B cell (primary cell): ENCODE measurements at regions of chr3 and their contacts with region 1.

Region 1: DNA sequence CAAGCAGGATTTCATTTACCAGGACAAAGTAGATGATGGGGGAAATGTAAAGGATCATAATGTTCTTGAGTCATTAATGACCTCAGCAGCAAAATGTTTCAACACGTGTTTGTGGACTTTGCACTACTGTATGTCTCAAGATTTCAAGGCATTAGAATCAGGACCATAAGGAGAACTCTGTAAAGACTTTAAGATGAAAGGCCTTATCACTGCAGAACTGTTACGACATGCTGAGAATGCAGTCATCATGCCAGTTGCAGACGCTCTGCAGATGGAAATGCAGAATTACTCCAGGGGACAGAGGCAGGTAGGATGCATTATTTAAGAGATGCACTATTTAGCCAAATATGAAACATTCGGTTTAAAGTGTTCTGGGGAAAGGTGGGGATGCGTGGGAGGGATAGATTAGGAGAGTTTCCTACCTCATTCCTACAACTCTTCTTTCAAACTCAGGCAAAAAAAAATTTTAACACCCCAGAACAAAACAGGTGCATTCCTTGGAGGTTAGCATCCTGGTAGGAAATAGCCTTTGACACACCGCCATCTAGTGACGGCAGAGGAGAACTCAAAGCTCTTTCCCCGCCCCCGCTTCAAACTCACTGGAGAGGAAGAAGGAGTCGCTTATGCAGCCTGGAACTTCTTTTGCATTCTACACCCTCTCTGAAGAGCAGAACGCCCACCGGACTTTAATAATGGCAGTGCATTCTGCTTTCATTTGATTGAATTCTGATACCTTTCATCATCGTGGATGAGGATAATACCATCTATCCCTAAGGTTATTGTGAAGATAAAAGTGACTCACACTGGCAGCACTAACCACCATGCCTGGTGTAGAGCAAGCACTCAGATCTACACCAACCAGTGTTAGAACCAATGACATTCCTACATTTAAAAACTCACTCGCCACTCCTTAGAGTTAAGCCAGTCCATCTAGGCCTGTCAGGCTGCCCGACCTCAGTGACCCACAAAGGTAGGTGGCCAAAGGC is 43.1 kb upstream of the TOPAZ1 start:
- DNase-seq: peak; percentile 76
- ATAC-seq: peak; percentile 70
- H3K4me3 ChIP-seq: no peak overlapping the region
- H3K4me3 Mint-ChIP-seq: no peak overlapping the region
- H3K27ac ChIP-seq: no peak overlapping the region
- H3K27ac Mint-ChIP-seq: no peak overlapping the region
- H3K4me1 ChIP-seq: no peaks in the 10 kb centered on the region
- H3K4me1 Mint-ChIP-seq: no peaks in the 10 kb centered on the region
- H3K27me3 ChIP-seq: peaks cover 0 to 5% (median 1%) of the 10 kb centered on the region in 4 experiments
- H3K27me3 Mint-ChIP-seq: peaks cover 12% of the 10 kb centered on the region
- CTCF ChIP-seq: peak; percentile 90

Region 2: GRCh38 chr3:43540624-43541023 is 658.0 kb before region 1 on chr3:
- CTCF ChIA-PET with region 1: interaction called, 51 read pairs
- POLR2A ChIA-PET with region 1: no interaction called
- intact Hi-C with region 1: loop called (anchors 1 kb)
- DNase-seq: no peak
- ATAC-seq: no peak
- H3K4me3 ChIP-seq: no peak overlapping the region
- H3K4me3 Mint-ChIP-seq: no peak overlapping the region
- H3K27ac ChIP-seq: no peak overlapping the region
- H3K27ac Mint-ChIP-seq: no peak overlapping the region
- H3K4me1 ChIP-seq: no peaks in the 10 kb centered on the region
- H3K4me1 Mint-ChIP-seq: no peaks in the 10 kb centered on the region
- H3K27me3 ChIP-seq: no peaks in the 10 kb centered on the region
- H3K27me3 Mint-ChIP-seq: no peaks in the 10 kb centered on the region
- CTCF ChIP-seq: no peak

Region 3: GRCh38 chr3:43855674-43856299 is 342.8 kb before region 1 on chr3:
- CTCF ChIA-PET with region 1: interaction called, 51 read pairs
- POLR2A ChIA-PET with region 1: no interaction called
- intact Hi-C with region 1: loop called (anchors 1 kb)
- DNase-seq: peak; percentile 60
- ATAC-seq: peak; percentile 76
- H3K4me3 ChIP-seq: no peak overlapping the region
- H3K4me3 Mint-ChIP-seq: no peak overlapping the region
- H3K27ac ChIP-seq: no peak overlapping the region
- H3K27ac Mint-ChIP-seq: no peak overlapping the region
- H3K4me1 ChIP-seq: peaks cover 0 to 4% of the 10 kb centered on the region in 2 donors
- H3K4me1 Mint-ChIP-seq: peaks cover 3% of the 10 kb centered on the region
- H3K27me3 ChIP-seq: peaks cover 0 to 33% (median 10%) of the 10 kb centered on the region in 4 experiments
- H3K27me3 Mint-ChIP-seq: peaks cover 66% of the 10 kb centered on the region
- CTCF ChIP-seq: peak; percentile 54

Region 4: DNA sequence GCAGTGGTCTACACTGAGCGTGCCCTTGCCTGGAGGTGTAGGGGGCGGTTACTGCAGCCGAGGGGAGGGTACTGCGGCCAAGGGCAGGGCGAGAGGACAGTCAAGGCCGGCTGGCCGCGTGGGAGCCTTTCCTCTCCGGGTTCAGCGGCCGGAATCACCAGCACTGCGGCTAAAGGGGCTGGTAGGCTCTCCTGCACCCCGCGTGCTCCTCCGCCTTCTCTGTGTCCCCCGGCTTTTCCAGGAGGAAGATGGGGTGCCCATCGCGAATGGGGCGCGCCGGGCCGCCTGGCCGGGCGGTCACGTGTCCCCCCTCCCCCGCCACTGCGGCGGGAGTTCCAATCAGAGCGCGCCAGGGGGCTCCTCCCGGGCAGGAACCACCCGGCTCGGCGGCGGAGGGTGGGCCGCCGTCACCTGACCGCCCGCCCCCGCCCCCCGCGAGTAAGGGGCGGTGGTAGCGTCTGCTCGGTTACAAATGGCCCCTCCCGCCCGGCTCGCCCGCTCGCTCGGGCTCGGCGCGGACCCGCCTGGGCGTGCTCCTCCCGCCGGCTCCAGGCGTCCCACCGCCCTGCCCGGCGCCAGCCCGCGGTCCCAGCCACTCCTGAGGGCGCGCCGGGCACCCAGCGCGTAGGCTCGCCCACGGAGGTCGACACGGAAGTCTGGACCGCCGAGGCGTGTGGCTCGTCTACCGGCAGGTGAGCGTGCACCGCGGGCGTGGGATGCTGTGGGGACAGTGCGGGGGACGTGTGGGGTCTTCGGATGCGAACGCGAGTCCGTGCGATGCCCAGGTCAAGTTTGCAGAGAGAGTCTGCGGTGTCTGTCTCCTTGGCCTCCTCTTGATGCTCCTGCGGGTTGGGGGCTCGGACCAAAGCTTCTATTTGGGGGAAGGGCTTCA is 199.5 kb before region 1 on chr3:
- CTCF ChIA-PET with region 1: interaction called, 7 read pairs
- POLR2A ChIA-PET with region 1: no interaction called
- intact Hi-C with region 1: loop called (anchors 1 kb)
- DNase-seq: peak; percentile 63
- ATAC-seq: peak; percentile 57
- H3K4me3 ChIP-seq: peak overlapping the region in 4 of 5 experiments; percentile 37 to 74 (median 56)
- H3K4me3 Mint-ChIP-seq: peak overlapping the region; percentile 95
- H3K27ac ChIP-seq: no peak overlapping the region
- H3K27ac Mint-ChIP-seq: peak overlapping the region; percentile 67
- H3K4me1 ChIP-seq: peaks cover 50 to 54% of the 10 kb centered on the region in 2 donors
- H3K4me1 Mint-ChIP-seq: peaks cover 53% of the 10 kb centered on the region
- H3K27me3 ChIP-seq: peaks cover 0 to 62% (median 34%) of the 10 kb centered on the region in 4 experiments
- H3K27me3 Mint-ChIP-seq: peaks cover 57% of the 10 kb centered on the region
- CTCF ChIP-seq: no peak

Region 5: DNA sequence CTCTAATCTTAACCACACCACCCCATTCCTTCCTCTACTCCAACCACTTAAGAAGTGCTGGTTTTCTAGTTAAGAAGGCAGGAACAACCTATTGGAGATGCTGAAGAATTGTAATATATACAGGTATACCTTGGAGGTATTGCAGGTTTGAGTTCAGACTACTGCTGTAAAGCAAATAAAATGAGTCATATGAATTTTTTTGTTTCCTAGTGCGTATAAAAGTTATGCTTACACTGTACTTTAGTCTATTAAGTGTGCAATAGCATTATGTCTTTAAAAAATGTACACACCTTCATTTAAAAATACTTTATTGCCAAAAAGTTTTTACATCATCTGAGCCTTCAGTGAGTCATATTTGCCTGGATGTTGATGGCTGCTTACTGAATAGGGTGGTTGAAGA is 65.6 kb after region 1 on chr3:
- CTCF ChIA-PET with region 1: no interaction called
- POLR2A ChIA-PET with region 1: no interaction called
- intact Hi-C with region 1: no loop called
- DNase-seq: no peak
- ATAC-seq: no peak
- H3K4me3 ChIP-seq: no peak overlapping the region
- H3K4me3 Mint-ChIP-seq: no peak overlapping the region
- H3K27ac ChIP-seq: no peak overlapping the region
- H3K27ac Mint-ChIP-seq: no peak overlapping the region
- H3K4me1 ChIP-seq: no peaks in the 10 kb centered on the region
- H3K4me1 Mint-ChIP-seq: no peaks in the 10 kb centered on the region
- H3K27me3 ChIP-seq: no peaks in the 10 kb centered on the region
- H3K27me3 Mint-ChIP-seq: peaks cover 34% of the 10 kb centered on the region
- CTCF ChIP-seq: no peak